ENCODE measurements at regions of chr12 and their contacts with region 1.

Region 1: GRCh38 chr12:52139552-52140062 is 52.2 kb downstream of the KRT80 start:
- DNase-seq: peak in 1 of 2 donors; percentile 60
- H3K4me3 ChIP-seq: no peak overlapping the region
- H3K27ac ChIP-seq: peak overlapping the region in 1 of 2 donors; percentile 3
- H3K4me1 ChIP-seq: peaks cover 0 to 8% of the 10 kb centered on the region in 2 donors
- H3K27me3 ChIP-seq: no peaks in the 10 kb centered on the region
- CTCF ChIP-seq: peak in 2 of 3 donors; percentile 68 to 90
- POLR2A ChIP-seq: no peak

Region 2: GRCh38 chr12:51368640-51369517 is 770.7 kb before region 1 on chr12:
- intact Hi-C with region 1: no loop called
- DNase-seq: no peak
- H3K4me3 ChIP-seq: no peak overlapping the region
- H3K27ac ChIP-seq: no peak overlapping the region
- H3K4me1 ChIP-seq: no peaks in the 10 kb centered on the region
- H3K27me3 ChIP-seq: no peaks in the 10 kb centered on the region
- CTCF ChIP-seq: no peak
- POLR2A ChIP-seq: no peak

Region 3: DNA sequence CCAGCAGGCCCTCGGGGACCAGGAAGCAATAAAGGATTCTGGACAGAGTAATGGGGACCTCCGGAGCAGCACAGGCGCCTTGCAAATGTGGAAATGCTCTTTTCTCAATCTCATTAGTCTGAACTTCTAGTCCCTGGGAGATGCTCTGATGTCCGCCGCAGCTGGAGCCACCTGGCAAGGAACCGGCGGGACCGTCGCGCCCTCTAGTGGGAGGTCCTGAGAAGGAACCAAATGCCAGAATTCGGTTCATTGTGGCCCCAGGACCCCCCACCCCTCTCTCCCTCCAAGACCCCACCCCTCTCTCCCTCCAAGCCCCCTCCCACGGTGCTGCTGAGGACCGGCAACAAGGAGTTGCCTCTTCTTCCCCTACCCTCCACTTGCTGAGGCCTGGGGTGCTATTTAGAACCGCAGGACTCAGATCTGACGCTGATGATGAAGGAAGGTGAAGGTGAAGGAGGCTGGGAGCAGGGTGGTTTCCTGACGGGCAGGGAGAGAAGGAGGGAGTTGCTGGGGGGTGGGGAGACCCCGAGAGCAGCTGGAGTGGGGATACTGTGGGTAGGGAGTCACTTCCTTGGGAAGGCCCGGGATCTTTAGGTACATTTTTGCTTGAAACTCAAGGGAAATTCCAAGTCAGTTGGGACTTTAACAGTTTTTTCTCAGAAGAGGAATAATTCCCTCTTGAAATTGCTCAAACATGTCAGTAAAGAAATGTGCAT is 17.6 kb before region 1 on chr12:
- intact Hi-C with region 1: loop called (anchors 2 kb)
- DNase-seq: no peak
- H3K4me3 ChIP-seq: no peak overlapping the region
- H3K27ac ChIP-seq: no peak overlapping the region
- H3K4me1 ChIP-seq: peaks cover 0 to 6% of the 10 kb centered on the region in 2 donors
- H3K27me3 ChIP-seq: no peaks in the 10 kb centered on the region
- CTCF ChIP-seq: peak; percentile 13 to 51 (median 46)
- POLR2A ChIP-seq: no peak

Region 4: GRCh38 chr12:52213512-52214420 is 74.2 kb after region 1 on chr12:
- intact Hi-C with region 1: loop called (anchors 10 kb)
- DNase-seq: peak; percentile 63 to 82
- H3K4me3 ChIP-seq: no peak overlapping the region
- H3K27ac ChIP-seq: peak overlapping the region in 1 of 2 donors; percentile 15
- H3K4me1 ChIP-seq: peaks cover 7 to 25% of the 10 kb centered on the region in 2 donors
- H3K27me3 ChIP-seq: no peaks in the 10 kb centered on the region
- CTCF ChIP-seq: peak; percentile 68 to 98 (median 75)
- POLR2A ChIP-seq: no peak

Region 5: GRCh38 chr12:52582971-52583456 is 443.4 kb after region 1 on chr12:
- intact Hi-C with region 1: loop called (anchors 5 kb)
- DNase-seq: peak; percentile 68 to 75
- H3K4me3 ChIP-seq: no peak overlapping the region
- H3K27ac ChIP-seq: peak overlapping the region; percentile 52 to 53
- H3K4me1 ChIP-seq: no peaks in the 10 kb centered on the region
- H3K27me3 ChIP-seq: no peaks in the 10 kb centered on the region
- CTCF ChIP-seq: peak; percentile 76 to 83 (median 82)
- POLR2A ChIP-seq: no peak

Measured in breast epithelium (tissue), 4 donors.